Gastrocnemius medialis (tissue), 4 donors: ENCODE measurements at regions of chr3 and their contacts with region 1.

Region 1: DNA sequence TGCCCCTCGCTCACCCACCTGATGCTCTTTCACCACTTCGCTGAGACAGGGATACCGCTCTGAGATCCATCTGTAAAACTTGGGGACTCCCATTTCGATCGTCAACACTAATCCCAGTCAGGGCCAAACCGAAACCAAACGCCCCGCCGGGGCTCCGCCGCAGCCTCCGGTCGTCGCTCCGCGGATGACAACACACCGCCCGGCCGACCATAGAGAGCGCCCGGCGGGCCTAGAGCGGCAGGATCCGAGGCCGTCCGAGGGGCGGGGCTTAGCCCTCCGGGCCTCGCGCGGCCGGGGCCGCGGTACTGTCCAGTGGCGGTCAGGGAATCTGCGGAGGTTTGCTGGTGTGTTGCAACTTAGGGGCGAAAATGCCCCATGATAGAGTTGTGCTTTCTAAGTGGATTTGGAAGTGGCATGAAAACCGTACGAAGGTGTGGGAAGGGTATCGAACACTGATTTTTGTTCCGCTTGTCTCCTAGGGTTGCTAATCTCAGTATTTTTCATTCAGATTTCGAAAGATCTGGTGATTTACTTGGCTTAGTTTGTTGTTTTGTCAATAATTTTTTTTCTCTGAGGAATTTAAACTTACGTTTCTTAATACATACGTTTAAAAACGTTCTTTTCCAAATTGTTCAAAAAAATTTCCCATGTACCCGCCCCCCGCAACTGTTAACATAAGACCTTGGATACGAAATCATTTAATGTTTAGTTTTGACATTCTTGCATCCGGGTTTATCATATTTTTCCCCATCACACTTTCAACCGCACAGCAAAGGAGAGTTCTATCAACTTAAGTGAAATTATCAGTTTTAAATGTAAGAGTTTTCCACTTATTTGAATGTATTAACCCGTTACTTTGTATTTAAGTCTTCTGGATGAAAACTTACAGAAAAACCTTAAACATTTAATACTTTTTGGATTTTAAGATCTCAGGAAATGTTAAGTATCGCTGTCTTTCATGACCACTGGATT is at the start of gene XRN1:
- DNase-seq: peak; percentile 86 to 95
- ATAC-seq: peak; percentile 92
- H3K4me3 ChIP-seq: peak within 1 kb of the TSS; percentile 91 to 98 (median 94)
- H3K27ac ChIP-seq: peak within 1 kb of the TSS; percentile 96 to 100 (median 99)
- H3K4me1 ChIP-seq: peaks cover 28 to 34% of the 10 kb centered on the region in 2 donors
- H3K27me3 ChIP-seq: no peaks in the 10 kb centered on the region
- CTCF ChIP-seq: no peak
- POLR2A ChIP-seq: peak; percentile 66 to 80
- total RNA-seq, gene XRN1: 41.8 to 52.2 (median 47.3) TPM

Region 2: DNA sequence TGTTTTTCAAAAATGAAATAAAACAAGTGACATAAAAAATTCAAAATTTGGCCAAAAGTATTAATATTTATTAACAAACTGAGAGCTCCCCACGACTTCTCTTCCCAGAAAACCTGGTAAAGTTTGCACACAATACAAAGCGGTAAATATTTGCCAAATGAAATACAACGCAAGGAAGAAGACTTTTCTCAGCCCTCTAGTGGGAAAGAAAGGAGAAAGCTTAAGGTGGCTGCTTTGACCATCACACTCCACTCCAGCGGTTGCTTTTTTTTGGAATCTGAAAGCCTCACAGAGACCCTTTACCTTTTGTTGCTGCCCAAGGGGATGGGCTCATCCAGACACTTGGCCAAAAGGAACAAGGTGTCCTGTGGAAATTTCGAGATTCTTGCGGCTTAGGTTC is 221.7 kb before region 1 on chr3:
- in situ Hi-C with region 1: no loop called
- intact Hi-C with region 1: loop called (anchors 5 kb)
- DNase-seq: no peak
- ATAC-seq: no peak
- H3K4me3 ChIP-seq: no peak overlapping the region
- H3K27ac ChIP-seq: no peak overlapping the region
- H3K4me1 ChIP-seq: peaks cover 9 to 13% of the 10 kb centered on the region in 2 donors
- H3K27me3 ChIP-seq: no peaks in the 10 kb centered on the region
- CTCF ChIP-seq: no peak
- POLR2A ChIP-seq: no peak

Region 3: DNA sequence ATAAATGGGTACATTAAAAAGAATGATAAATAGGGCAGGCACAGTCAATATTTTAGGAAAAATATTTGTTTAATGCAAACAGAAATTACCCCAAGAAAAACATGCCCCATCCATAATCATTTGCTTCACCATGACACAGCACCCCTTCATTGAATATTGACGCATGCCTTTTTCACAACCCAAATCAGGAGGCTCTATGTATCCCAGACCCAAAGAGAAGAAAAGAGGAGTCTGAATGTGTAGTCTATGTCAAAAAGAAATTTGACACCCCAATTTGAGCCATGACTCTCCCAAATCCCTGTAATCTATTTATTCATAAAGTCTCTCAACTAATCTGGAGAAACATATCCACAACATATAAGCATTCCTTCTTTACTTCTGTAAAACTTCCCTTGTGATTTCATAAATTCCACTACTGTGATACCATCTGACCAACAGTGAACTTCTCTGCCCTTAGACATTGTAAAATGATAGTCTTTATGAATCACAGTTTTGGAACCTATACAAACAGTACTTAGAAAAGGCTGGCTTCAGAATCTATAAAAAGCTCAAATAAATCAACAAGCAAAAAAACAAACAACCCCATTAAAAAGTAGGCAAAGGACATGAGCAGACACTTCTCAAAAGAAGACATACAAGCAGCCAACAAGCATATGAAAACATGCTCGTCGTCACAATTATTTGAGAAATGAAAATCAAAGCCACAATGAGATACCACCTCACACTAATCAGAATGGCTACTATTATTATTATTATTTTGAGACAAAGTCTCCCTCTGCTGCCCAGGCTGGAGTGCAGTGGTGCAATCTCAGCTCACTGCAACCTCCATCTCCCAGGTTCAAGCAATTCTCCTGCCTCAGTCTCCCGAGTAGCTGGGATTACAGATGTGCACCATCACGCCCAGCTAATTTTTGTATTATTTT is 53.1 kb after region 1 on chr3:
- in situ Hi-C with region 1: no loop called
- intact Hi-C with region 1: loop called (anchors 5 kb)
- DNase-seq: no peak
- ATAC-seq: peak; percentile 94 to 97
- H3K4me3 ChIP-seq: peak overlapping the region in 1 of 4 donors; percentile 0
- H3K27ac ChIP-seq: peak overlapping the region; percentile 49 to 75 (median 74)
- H3K4me1 ChIP-seq: peaks cover 10 to 30% of the 10 kb centered on the region in 2 donors
- H3K27me3 ChIP-seq: no peaks in the 10 kb centered on the region
- CTCF ChIP-seq: no peak
- POLR2A ChIP-seq: no peak

Region 4: DNA sequence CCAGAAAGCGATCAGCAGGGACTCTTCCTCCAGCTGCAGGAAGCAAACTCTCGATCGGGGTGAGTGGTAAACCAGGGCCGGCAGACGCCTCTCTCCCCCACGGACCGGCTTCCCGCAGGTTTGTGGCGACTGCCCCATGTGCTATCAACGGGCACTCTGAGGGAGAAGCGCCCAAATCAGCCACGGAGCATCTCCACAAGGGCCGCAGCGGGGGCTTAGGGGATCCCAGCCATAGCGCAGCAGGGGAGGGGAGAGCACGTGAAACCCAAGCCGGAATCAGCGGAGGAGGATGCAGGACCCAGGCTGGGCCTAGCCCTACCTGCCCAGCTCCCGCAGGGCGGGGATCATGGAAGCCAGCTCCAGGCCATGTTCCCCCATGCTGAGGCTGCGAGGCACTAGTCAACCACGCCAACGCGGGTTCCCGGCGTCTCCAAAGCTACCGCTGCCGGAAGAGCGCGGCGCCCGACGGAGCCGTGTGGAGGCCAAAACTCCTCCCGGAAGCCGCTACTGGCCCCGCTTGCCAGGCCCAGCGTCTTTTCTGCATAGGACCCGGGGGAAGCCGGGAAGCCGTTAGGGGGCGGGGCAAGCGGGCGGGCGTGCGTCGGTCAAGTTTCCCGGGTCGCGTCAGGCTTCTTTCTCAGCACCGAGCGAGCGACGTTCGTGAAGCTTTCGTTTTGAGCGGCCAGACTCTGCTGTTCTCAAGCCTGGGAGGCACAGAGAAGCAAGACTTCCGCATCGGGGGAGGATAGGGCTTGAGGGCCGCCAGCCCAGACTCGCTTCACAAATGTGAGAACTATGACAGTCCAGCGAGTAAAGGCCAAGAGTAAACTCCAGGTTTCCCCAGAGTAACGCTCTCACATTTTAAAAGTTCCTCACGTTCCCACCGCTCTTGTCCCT is 130.4 kb after region 1 on chr3 and contains the start of gene ATR:
- in situ Hi-C with region 1: no loop called
- intact Hi-C with region 1: loop called (anchors 2 kb)
- DNase-seq: peak; percentile 95 to 96
- ATAC-seq: peak; percentile 98 to 99
- H3K4me3 ChIP-seq: peak within 1 kb of the TSS; percentile 76 to 98 (median 86)
- H3K27ac ChIP-seq: peak within 1 kb of the TSS; percentile 86 to 91 (median 88)
- H3K4me1 ChIP-seq: peaks cover 14 to 19% of the 10 kb centered on the region in 2 donors
- H3K27me3 ChIP-seq: no peaks in the 10 kb centered on the region
- CTCF ChIP-seq: peak in 2 of 5 experiments; percentile 14 to 19
- POLR2A ChIP-seq: peak; percentile 45 to 70
- total RNA-seq, gene ATR: 8.9 to 21.9 (median 10.0) TPM

Region 5: DNA sequence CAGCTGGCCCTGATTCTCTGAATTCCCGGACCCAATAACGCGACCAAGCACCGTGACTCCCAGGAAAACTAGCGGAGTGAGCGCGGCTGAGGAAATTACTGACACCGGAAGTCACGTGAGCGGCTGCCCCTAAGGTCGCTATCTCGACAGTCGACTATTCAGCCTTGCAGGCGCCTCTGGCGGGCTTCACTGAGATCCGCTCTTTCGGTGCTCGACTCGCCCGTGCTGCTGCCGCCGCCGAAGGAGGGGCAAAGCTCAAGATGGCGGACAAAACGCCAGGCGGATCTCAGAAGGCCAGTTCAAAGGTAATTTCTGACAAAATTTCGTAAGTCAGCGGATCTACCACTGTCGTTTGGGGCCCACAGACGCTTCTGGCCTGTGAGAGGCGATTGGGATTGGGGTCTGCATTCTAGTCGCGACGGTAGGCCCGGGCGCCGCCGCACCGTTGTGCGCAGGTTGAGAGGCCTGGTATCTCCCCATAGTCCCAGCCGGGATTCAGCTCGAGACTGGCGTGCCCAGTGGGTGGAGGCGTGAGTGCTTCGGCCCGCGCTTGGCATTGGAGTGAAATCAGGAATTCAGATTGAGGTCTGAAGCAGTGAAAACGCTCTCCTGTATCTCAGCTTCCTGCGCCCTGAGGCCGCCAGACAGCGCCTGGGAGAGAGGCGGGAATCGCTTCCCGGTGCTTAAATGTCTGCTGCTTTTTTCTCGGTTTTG is 553.4 kb after region 1 on chr3 and contains the start of gene U2SURP:
- in situ Hi-C with region 1: loop called in 1 of 4 experiments (anchors 25 kb)
- intact Hi-C with region 1: loop called (anchors 5 kb)
- DNase-seq: peak; percentile 95 to 96
- ATAC-seq: peak; percentile 92 to 94
- H3K4me3 ChIP-seq: peak within 1 kb of the TSS; percentile 65 to 95 (median 87)
- H3K27ac ChIP-seq: peak within 1 kb of the TSS; percentile 92 to 95 (median 94)
- H3K4me1 ChIP-seq: peaks cover 49 to 53% of the 10 kb centered on the region in 2 donors
- H3K27me3 ChIP-seq: no peaks in the 10 kb centered on the region
- CTCF ChIP-seq: peak in 1 of 5 experiments; percentile 26
- POLR2A ChIP-seq: peak; percentile 80 to 82
- total RNA-seq, gene U2SURP: 43.2 to 63.7 (median 43.9) TPM